ENCODE measurements at regions of chr15 and their contacts with region 1.

Region 1: DNA sequence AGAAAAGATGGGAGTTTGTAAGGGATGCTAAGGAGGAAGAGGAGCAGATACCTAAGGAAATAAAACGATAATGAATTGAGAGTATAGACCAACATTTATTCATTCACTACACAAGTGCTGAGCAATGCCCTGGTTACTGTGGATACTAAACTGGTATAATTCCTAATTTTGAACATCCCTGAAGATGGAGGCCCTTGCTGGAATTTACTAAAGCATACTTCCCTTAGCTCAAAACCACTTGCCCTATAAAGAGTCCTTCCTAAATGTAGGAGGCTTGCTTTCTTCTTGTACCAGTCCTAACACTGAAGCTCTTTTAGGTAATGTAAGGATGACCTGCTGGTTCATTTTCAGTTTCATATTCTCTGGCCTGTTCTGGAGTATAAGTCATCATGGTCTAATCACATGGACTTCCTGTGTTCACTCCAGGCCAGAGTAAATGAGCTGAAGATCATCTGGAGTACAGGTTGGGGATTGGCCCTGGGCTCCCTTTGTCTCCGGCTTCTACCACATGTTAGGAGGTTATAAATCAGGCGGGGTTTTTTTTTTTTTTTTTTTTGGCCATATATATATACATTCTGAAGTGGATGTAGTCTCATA is 40.1 kb upstream of the MTMR10 start:
- DNase-seq: peak; percentile 64
- H3K4me3 ChIP-seq: no peak overlapping the region
- H3K27ac ChIP-seq: peak overlapping the region; percentile 78
- H3K4me1 ChIP-seq: peaks cover 52% of the 10 kb centered on the region
- H3K27me3 ChIP-seq: no peaks in the 10 kb centered on the region
- CTCF ChIP-seq: no peak
- POLR2A ChIP-seq: no peak

Region 2: DNA sequence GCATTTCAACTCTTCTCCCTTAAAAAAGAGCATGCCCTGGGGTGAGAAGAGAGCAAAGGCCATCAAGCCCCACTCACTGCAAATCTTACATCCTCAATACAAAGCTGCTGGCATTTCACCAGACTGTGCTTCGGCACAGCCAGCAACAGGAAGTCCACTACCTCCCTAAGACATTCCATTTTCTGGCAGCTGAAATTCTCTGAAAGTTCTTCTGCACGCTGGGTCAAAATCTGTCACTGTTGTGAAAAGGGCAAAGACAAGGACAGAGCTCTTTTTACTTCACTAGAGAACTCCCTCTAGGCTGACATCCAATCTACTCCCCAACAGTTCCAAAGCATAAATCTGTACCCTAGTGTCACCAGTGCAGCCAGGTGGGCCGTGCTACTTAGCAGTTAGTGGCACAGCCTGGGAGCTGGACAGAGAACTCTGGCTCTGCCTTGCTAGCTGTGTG is 46.5 kb before region 1 on chr15:
- CTCF ChIA-PET with region 1: interaction called, 3 read pairs
- POLR2A ChIA-PET with region 1: interaction called, 8 read pairs
- dilution Hi-C with region 1: no loop called
- intact Hi-C with region 1: loop called (anchors 1 kb)
- DNase-seq: peak; percentile 61
- H3K4me3 ChIP-seq: peak overlapping the region in 2 of 3 experiments; percentile 19 to 42
- H3K27ac ChIP-seq: peak overlapping the region; percentile 23
- H3K4me1 ChIP-seq: peaks cover 59% of the 10 kb centered on the region
- H3K27me3 ChIP-seq: no peaks in the 10 kb centered on the region
- CTCF ChIP-seq: no peak
- POLR2A ChIP-seq: no peak

Region 3: GRCh38 chr15:30991255-30992072 is 40.1 kb before region 1 on chr15 and contains the start of gene MTMR10:
- CTCF ChIA-PET with region 1: interaction called, 7 read pairs
- POLR2A ChIA-PET with region 1: interaction called, 9 read pairs
- dilution Hi-C with region 1: no loop called
- intact Hi-C with region 1: loop called (anchors 1 kb)
- DNase-seq: peak; percentile 78
- H3K4me3 ChIP-seq: peak within 1 kb of the TSS; percentile 81 to 96 (median 91)
- H3K27ac ChIP-seq: peak within 1 kb of the TSS; percentile 88
- H3K4me1 ChIP-seq: peaks cover 31% of the 10 kb centered on the region
- H3K27me3 ChIP-seq: no peaks in the 10 kb centered on the region
- CTCF ChIP-seq: no peak
- POLR2A ChIP-seq: peak; percentile 93
- total RNA-seq, gene MTMR10: 65.5 and 88.5 TPM in 2 replicates

Region 4: GRCh38 chr15:31004220-31004733 is 27.3 kb before region 1 on chr15:
- CTCF ChIA-PET with region 1: no interaction called
- POLR2A ChIA-PET with region 1: no interaction called
- dilution Hi-C with region 1: no loop called
- intact Hi-C with region 1: loop called (anchors 1 kb)
- DNase-seq: peak; percentile 88
- H3K4me3 ChIP-seq: peak overlapping the region in 1 of 3 experiments; percentile 15
- H3K27ac ChIP-seq: peak overlapping the region; percentile 64
- H3K4me1 ChIP-seq: peaks cover 15% of the 10 kb centered on the region
- H3K27me3 ChIP-seq: no peaks in the 10 kb centered on the region
- CTCF ChIP-seq: no peak
- POLR2A ChIP-seq: no peak

Region 5: DNA sequence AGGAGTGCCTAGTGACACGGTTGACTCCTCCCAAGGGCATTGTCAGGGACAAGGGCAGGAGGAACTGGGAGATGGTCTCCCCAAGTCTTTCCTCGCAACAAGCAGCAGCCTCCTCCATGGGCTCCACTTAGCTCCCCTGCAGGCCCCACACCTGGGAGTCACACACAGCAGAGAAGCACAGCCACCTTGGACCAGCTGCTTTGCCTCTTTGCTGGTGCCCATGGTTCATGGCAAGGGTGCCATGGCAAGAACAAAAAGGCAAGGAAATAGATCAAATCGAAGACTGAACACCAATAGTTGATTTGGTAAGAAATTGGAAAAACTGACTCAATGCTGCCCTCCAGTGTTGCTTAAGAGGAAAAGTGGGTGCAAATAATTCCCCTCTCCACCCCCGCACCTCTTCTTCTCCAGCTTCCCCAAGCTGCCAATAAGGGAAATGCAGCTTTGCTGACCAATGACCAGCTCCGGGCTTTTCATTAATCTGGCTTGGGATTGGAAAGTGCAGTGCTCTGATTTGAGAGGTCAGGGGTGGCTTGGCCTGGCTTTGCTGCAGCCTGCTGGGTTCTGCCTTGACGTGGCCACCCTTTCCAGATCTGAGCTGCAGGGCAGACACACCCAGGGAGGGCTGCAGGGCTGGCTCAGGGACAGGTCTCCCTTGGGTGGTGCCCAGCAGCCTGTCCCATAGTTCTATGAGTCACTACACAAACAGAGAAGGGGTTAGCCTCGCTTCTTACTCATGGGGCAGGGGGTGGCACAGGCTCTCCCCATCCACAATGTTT is 457.0 kb after region 1 on chr15:
- CTCF ChIA-PET with region 1: no interaction called
- POLR2A ChIA-PET with region 1: no interaction called
- dilution Hi-C with region 1: no loop called
- intact Hi-C with region 1: no loop called
- DNase-seq: peak; percentile 81
- H3K4me3 ChIP-seq: no peak overlapping the region
- H3K27ac ChIP-seq: no peak overlapping the region
- H3K4me1 ChIP-seq: peaks cover 5% of the 10 kb centered on the region
- H3K27me3 ChIP-seq: peaks cover 13 to 18% of the 10 kb centered on the region in 2 experiments
- CTCF ChIP-seq: peak; percentile 84 to 90
- POLR2A ChIP-seq: no peak

Measured in endothelial cell of umbilical vein (primary cell).